Transverse colon (tissue), 4 donors: ENCODE measurements at regions of chr7 and their contacts with region 1.

Region 1: GRCh38 chr7:73858807-73859206 is 2.2 kb upstream of the TMEM270 start:
- DNase-seq: no peak
- H3K4me3 ChIP-seq: no peak overlapping the region
- H3K27ac ChIP-seq: no peak overlapping the region
- H3K4me1 ChIP-seq: peaks cover 0 to 8% (median 7%) of the 10 kb centered on the region in 4 donors
- H3K27me3 ChIP-seq: no peaks in the 10 kb centered on the region
- CTCF ChIP-seq: no peak
- EP300 ChIP-seq: no peak
- POLR2A ChIP-seq: no peak

Region 2: DNA sequence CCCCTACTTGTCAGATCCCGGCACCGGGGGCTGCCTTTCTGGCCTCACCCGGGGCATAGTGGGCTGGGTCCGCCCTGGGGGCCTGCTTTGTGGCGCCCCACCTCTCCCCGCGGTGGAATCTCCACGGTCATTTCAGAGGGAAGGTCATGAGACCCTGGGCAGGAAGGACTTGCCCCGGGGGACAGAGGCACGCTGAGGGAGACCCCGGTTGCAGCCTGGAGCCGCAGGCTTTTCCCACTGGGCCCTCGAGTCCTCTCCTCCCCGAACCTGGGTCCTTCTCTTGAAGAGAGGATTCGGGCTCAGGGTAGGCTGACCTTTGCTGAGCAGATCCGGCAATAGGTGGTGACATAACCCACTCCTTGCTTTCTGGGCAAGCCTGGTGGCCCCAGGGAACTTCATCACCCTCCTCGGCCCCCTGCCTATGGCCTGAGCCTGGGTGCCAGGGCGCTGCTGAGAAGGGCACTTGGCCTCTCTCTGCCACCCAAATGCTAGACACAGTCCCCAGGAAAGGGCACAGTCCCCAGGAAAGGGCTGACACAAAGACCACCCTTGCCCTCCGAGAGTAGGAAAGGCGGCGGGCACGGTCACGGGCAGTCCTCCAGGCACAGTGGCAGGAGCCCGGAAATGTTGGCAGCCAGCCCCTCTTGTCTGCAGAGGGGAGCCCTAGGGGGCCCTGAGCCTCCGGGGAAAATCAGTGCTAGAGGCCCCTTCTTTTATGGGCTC is 494.6 kb before region 1 on chr7:
- in situ Hi-C with region 1: no loop called
- intact Hi-C with region 1: no loop called
- DNase-seq: no peak
- H3K4me3 ChIP-seq: no peak overlapping the region
- H3K27ac ChIP-seq: no peak overlapping the region
- H3K4me1 ChIP-seq: peaks cover 0 to under 1% (median 0%) of the 10 kb centered on the region in 4 donors
- H3K27me3 ChIP-seq: peaks cover 24% of the 10 kb centered on the region
- CTCF ChIP-seq: no peak
- EP300 ChIP-seq: no peak
- POLR2A ChIP-seq: no peak

Region 3: GRCh38 chr7:73811760-73812168 is 47.0 kb before region 1 on chr7:
- in situ Hi-C with region 1: loop called in 1 of 4 experiments (anchors 5 kb)
- intact Hi-C with region 1: loop called (anchors 2 kb)
- DNase-seq: peak; percentile 88
- H3K4me3 ChIP-seq: no peak overlapping the region
- H3K27ac ChIP-seq: peak overlapping the region; percentile 79 to 89 (median 87)
- H3K4me1 ChIP-seq: peaks cover 5 to 27% (median 17%) of the 10 kb centered on the region in 4 donors
- H3K27me3 ChIP-seq: peaks cover 3% of the 10 kb centered on the region
- CTCF ChIP-seq: peak; percentile 78 to 93 (median 89)
- EP300 ChIP-seq: no peak
- POLR2A ChIP-seq: no peak

Region 4: GRCh38 chr7:74289018-74289658 is 430.3 kb after region 1 on chr7 and contains the start of gene CLIP2:
- in situ Hi-C with region 1: no loop called
- intact Hi-C with region 1: no loop called
- DNase-seq: peak; percentile 84
- H3K4me3 ChIP-seq: peak within 1 kb of the TSS; percentile 58 to 93 (median 78)
- H3K27ac ChIP-seq: peak within 1 kb of the TSS; percentile 87 to 94 (median 91)
- H3K4me1 ChIP-seq: peaks cover 29 to 85% (median 76%) of the 10 kb centered on the region in 4 donors
- H3K27me3 ChIP-seq: no peaks in the 10 kb centered on the region
- CTCF ChIP-seq: no peak
- EP300 ChIP-seq: no peak
- POLR2A ChIP-seq: peak; percentile 8
- total RNA-seq, gene CLIP2: 84.5 to 157 (median 111) TPM